Naive thymus-derived CD4-positive, alpha-beta T cell (primary cell): ENCODE measurements at regions of chr17 and their contacts with region 1.

Region 1: GRCh38 chr17:59331129-59331928 is at the start of gene YPEL2:
- DNase-seq: peak; percentile 77 to 92 (median 89)
- ATAC-seq: peak; percentile 96
- H3K4me3 ChIP-seq: peak within 1 kb of the TSS; percentile 67
- H3K4me3 Mint-ChIP-seq: peak within 1 kb of the TSS; percentile 89 to 96 (median 94)
- H3K27ac ChIP-seq: peak within 1 kb of the TSS; percentile 77
- H3K27ac Mint-ChIP-seq: peak within 1 kb of the TSS; percentile 77 to 98 (median 94)
- H3K4me1 ChIP-seq: peaks cover 30 to 55% of the 10 kb centered on the region in 2 donors
- H3K4me1 Mint-ChIP-seq: peaks cover 53 to 85% (median 79%) of the 10 kb centered on the region in 7 donors
- H3K27me3 ChIP-seq: no peaks in the 10 kb centered on the region
- H3K27me3 Mint-ChIP-seq: peaks cover 0 to 11% (median 0%) of the 10 kb centered on the region in 5 donors
- total RNA-seq, gene YPEL2: 10.6 to 52.0 (median 46.8) TPM

Region 2: DNA sequence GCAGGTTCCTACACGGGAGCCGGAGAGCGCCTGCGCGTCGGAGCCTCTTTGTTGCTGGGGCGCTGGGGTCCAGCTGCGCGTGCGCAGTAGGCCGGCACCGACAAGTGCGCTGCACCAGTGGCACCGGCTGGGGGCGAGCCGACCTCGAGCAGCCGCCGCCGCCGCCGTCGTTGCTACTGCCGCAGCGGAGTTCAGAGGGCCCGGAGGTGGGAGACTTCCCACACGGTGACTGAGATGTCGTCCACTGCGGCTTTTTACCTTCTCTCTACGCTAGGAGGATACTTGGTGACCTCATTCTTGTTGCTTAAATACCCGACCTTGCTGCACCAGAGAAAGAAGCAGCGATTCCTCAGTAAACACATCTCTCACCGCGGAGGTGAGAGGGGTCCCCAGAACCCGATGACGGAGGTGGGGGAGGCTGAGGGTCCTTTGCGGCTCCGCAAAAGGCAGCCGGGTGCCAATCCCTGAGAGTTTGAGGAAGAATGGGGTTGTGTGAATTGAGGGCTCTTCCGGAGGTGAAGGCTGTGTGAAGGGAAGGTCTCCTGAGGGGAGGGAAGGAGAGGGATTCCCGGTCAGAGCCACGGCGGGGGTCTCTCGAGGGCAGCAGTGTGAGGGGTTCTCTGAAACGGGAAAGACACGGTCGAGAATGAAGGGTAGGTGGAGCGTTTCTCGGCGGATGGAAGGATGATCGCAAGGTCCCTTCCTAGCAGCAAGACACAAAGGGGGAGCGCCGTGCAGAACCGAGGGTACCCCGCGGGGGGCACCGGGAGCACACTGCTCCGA is 110.8 kb before region 1 on chr17 and contains the start of gene GDPD1:
- CTCF ChIA-PET with region 1: no interaction called
- POLR2A ChIA-PET with region 1: no interaction called
- intact Hi-C with region 1: loop called in 1 of 2 experiments (anchors 1 kb)
- DNase-seq: peak; percentile 95 to 98 (median 97)
- ATAC-seq: peak; percentile 100
- H3K4me3 ChIP-seq: peak within 1 kb of the TSS; percentile 99
- H3K4me3 Mint-ChIP-seq: peak within 1 kb of the TSS; percentile 94 to 100 (median 98)
- H3K27ac ChIP-seq: peak within 1 kb of the TSS; percentile 92
- H3K27ac Mint-ChIP-seq: peak within 1 kb of the TSS; percentile 94 to 100 (median 98)
- H3K4me1 ChIP-seq: peaks cover 5 to 9% of the 10 kb centered on the region in 2 donors
- H3K4me1 Mint-ChIP-seq: peaks cover 5 to 16% (median 14%) of the 10 kb centered on the region in 7 donors
- H3K27me3 ChIP-seq: no peaks in the 10 kb centered on the region
- H3K27me3 Mint-ChIP-seq: peaks cover 0 to 5% (median 0%) of the 10 kb centered on the region in 5 donors
- total RNA-seq, gene GDPD1: 2.4 to 6.0 (median 3.8) TPM

Region 3: DNA sequence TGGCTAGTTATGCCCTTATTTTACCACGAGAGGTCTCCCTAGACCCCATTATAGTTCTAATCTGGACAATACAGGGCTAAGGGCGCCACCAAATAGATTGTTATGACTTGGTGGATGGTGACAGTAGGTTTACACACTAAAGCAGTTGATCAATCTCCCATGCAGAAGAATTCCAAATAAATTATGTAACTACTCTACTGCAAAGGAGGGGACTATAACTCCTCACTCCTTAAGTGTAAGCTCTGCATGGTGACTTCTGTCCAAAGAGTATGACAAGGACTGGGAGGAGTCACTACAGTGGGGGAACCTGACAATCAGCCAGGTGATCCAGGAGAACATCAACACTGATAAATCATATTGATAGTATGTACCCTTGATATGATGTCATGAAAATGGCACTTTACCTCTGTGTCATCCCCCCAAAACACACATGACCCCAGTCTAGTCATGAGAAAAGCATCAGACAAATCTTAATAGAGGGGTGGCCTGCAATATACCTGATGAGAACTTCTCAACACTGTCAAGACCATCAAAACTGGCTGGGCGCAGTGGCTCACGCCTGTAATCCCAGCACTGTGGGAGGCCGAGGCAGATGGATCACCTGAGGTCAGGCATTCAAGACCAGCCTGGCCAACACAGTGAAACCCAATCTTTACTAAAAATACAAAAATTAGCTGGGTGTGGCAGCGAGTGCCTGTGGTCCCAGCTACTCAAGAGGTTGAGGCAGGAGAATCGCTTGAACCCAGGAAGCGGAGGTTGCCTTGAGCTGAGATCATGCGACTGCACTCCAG is 20.0 kb before region 1 on chr17:
- CTCF ChIA-PET with region 1: interaction called, 11 read pairs
- POLR2A ChIA-PET with region 1: interaction called, 3 read pairs
- intact Hi-C with region 1: loop called (anchors 1 kb)
- DNase-seq: peak in 8 of 9 donors; percentile 38 to 74 (median 63)
- ATAC-seq: peak; percentile 98
- H3K4me3 ChIP-seq: no peak overlapping the region
- H3K4me3 Mint-ChIP-seq: no peak overlapping the region
- H3K27ac ChIP-seq: no peak overlapping the region
- H3K27ac Mint-ChIP-seq: peak overlapping the region in 2 of 9 donors; percentile 29 to 76
- H3K4me1 ChIP-seq: no peaks in the 10 kb centered on the region
- H3K4me1 Mint-ChIP-seq: peaks cover 0 to 7% (median 4%) of the 10 kb centered on the region in 7 donors
- H3K27me3 ChIP-seq: no peaks in the 10 kb centered on the region
- H3K27me3 Mint-ChIP-seq: no peaks in the 10 kb centered on the region

Region 4: DNA sequence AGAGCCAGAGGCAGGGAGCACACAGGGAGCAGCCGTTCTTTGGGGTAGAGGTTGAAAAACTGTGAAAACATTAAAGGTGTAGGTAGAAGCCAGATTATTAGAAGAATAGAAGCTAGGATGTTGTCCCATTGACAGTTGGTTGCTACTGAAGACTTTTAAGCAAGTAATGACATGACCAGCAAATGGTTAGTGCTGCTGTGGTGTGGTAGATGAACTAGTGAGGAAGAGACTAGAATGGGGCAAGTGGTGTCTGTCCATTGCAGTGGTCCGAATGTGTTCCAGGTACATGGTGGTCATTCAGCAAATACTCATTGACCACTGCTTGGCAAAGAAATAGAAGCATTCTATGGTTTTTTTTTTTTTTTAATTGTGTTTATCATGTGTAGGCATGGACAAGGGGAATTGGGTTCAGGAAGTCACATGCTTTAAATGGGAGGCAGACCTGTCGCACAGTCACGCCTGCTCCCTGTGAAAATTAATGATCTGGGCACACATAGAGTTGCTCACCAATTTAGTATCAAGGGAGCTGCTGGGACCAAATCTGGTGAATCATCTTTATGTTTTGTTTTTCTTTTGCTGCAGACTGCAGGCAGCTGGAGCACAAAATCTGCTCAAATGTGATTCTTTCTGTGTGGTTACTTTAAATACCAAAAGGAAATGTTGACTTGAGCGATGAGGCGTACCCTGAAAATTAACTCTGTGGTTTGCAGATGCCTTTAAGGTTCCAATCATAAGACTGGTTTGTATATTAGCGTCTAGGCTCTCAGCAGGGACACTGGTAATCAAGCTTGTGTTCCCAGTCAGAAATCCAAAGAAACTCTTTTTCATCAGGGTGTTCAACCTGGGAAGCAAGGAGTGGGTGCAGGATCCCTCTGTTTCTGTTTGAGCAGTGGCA is 30.8 kb after region 1 on chr17:
- CTCF ChIA-PET with region 1: interaction called, 16 read pairs
- POLR2A ChIA-PET with region 1: interaction called, 96 read pairs
- intact Hi-C with region 1: loop called (anchors 1 kb)
- DNase-seq: peak in 8 of 9 donors; percentile 44 to 74 (median 64)
- ATAC-seq: peak; percentile 74
- H3K4me3 ChIP-seq: peak overlapping the region; percentile 43
- H3K4me3 Mint-ChIP-seq: peak overlapping the region; percentile 75 to 90 (median 80)
- H3K27ac ChIP-seq: peak overlapping the region; percentile 68
- H3K27ac Mint-ChIP-seq: peak overlapping the region; percentile 89 to 98 (median 94)
- H3K4me1 ChIP-seq: peaks cover 28 to 83% of the 10 kb centered on the region in 2 donors
- H3K4me1 Mint-ChIP-seq: peaks cover 57 to 97% (median 89%) of the 10 kb centered on the region in 7 donors
- H3K27me3 ChIP-seq: no peaks in the 10 kb centered on the region
- H3K27me3 Mint-ChIP-seq: no peaks in the 10 kb centered on the region

Region 5: DNA sequence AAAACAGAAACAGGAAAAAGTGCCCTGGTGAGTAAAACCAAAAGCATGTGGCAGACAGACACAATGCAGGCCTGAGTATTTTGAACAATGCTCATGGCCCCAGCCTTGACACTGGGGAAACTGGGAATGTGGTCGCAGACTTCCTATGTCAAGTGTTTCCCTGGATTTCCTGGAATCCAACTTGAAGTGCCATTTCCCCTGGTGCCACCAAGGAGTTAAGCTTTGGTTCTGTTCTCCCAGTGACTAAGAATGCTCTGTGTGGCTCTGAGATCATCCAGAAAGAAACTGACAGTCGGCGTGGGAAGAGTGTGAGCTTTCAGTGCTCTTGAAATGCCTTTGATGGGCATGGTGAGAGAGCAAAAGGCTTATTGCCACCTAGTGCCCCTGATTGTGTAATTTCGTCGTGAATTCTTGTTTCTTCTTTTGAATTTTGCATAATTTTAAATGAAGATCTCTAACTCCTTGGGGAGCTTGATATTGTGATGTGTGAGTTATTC is 96.1 kb after region 1 on chr17:
- CTCF ChIA-PET with region 1: interaction called, 20 read pairs
- POLR2A ChIA-PET with region 1: interaction called, 10 read pairs
- intact Hi-C with region 1: loop called in 1 of 2 experiments (anchors 1 kb)
- DNase-seq: peak in 5 of 9 donors; percentile 15 to 49 (median 21)
- ATAC-seq: no peak
- H3K4me3 ChIP-seq: no peak overlapping the region
- H3K4me3 Mint-ChIP-seq: no peak overlapping the region
- H3K27ac ChIP-seq: no peak overlapping the region
- H3K27ac Mint-ChIP-seq: no peak overlapping the region
- H3K4me1 ChIP-seq: no peaks in the 10 kb centered on the region
- H3K4me1 Mint-ChIP-seq: peaks cover 0 to 21% (median 7%) of the 10 kb centered on the region in 7 donors
- H3K27me3 ChIP-seq: no peaks in the 10 kb centered on the region
- H3K27me3 Mint-ChIP-seq: peaks cover 0 to 5% (median 0%) of the 10 kb centered on the region in 5 donors

Region 6: DNA sequence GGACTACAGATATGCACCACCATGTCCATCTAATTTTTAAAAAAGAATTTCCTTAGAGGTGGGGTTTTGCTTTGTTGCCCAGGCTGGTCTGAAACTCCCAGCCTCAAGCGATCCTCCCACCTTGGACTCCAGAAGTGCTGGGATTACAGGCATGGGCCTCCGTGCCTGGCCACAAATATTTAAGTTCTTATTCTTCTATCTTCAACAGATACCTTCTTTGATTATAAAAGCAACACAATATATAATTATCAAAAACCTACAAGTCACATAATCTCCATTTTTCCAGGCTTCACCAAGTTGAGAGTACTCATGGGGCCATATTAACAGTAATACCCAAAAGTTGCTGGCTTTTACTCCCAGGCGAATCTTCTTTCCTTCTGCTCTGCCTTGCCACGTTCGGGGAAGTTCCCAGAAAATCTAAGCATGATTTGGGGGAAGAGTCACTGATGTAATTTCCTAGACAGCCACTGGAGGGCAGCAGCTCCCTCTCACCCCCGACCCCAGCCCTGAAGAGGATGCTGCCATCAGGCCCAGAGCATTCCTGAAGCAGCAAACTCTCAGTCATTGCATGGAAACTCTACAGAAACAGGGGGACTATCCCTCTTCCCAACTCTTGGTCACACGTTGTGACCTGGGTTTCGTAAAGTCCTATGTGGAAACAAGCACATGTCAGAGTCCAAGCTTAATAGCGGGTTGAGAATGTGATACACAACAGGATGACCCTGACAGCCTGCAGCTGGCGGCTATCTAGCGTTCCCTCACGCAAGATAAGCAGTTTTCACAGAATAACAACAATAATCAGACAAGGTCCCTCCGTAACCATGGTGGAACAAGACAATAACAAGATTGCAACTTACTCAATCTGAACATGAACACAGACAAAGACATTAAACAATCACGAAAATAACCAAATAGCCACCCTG is 190.1 kb after region 1 on chr17:
- CTCF ChIA-PET with region 1: no interaction called
- POLR2A ChIA-PET with region 1: no interaction called
- intact Hi-C with region 1: loop called in 1 of 2 experiments (anchors 5 kb)
- DNase-seq: peak; percentile 17 to 69 (median 38)
- ATAC-seq: peak; percentile 85
- H3K4me3 ChIP-seq: no peak overlapping the region
- H3K4me3 Mint-ChIP-seq: no peak overlapping the region
- H3K27ac ChIP-seq: no peak overlapping the region
- H3K27ac Mint-ChIP-seq: no peak overlapping the region
- H3K4me1 ChIP-seq: no peaks in the 10 kb centered on the region
- H3K4me1 Mint-ChIP-seq: peaks cover 0 to 6% (median 5%) of the 10 kb centered on the region in 7 donors
- H3K27me3 ChIP-seq: peaks cover 0 to 3% of the 10 kb centered on the region in 2 donors
- H3K27me3 Mint-ChIP-seq: peaks cover 4 to 22% (median 10%) of the 10 kb centered on the region in 5 donors